PC-9 (cell line): ENCODE measurements at regions of chr9 and their contacts with region 1.

Region 1: GRCh38 chr9:75200892-75201470 is 112.7 kb downstream of the OSTF1 start:
- DNase-seq: peak; percentile 9 to 46
- H3K4me3 ChIP-seq: no peak overlapping the region
- H3K27ac ChIP-seq: no peak overlapping the region
- H3K4me1 ChIP-seq: no peaks in the 10 kb centered on the region
- H3K27me3 ChIP-seq: no peaks in the 10 kb centered on the region
- CTCF ChIP-seq: peak; percentile 84

Region 2: DNA sequence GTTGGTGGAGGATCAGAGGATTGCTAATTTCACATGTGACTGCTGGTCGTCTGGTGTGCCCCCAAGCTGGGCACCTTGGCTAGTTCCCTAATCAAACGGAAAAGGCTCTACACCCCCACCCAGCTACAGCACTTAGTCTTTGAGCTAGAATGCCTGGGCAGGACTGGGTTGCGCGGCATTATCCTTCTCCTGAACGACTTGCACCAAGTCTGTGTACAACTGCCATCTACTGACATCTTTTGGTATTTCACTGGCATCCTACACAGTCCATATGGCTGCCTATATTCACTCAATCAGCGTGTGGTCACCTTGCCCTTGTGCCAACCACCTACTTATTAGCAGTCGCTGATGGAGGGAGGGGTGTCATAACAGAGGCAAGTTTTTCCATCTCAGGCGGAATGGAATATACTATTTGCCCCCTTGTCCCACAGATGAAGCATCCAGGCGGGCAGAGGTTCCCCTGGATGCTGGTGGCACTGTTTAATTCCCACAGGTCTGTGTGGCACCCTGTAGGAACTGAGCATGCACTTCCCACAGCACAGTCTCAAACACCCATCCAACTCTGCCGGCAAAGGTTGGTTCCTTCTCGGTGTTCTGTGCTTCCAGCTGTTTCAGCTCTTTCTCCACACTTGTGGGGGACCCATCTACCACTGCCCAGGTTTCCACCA is 37.5 kb after region 1 on chr9:
- CTCF ChIA-PET with region 1: interaction called, 4 read pairs
- POLR2A ChIA-PET with region 1: no interaction called
- intact Hi-C with region 1: loop called (anchors 1 kb)
- DNase-seq: peak; percentile 45 to 61
- H3K4me3 ChIP-seq: no peak overlapping the region
- H3K27ac ChIP-seq: no peak overlapping the region
- H3K4me1 ChIP-seq: peaks cover 14% of the 10 kb centered on the region
- H3K27me3 ChIP-seq: no peaks in the 10 kb centered on the region
- CTCF ChIP-seq: peak; percentile 84

Region 3: GRCh38 chr9:76704593-76705204 is 1503.7 kb after region 1 on chr9:
- CTCF ChIA-PET with region 1: no interaction called
- POLR2A ChIA-PET with region 1: no interaction called
- intact Hi-C with region 1: loop called (anchors 2 kb)
- DNase-seq: peak; percentile 25 to 64
- H3K4me3 ChIP-seq: no peak overlapping the region
- H3K27ac ChIP-seq: no peak overlapping the region
- H3K4me1 ChIP-seq: no peaks in the 10 kb centered on the region
- H3K27me3 ChIP-seq: peaks cover 50% of the 10 kb centered on the region
- CTCF ChIP-seq: peak; percentile 85